Endothelial cell of umbilical vein (primary cell): ENCODE measurements at regions of chr1 and their contacts with region 1.

Region 1: DNA sequence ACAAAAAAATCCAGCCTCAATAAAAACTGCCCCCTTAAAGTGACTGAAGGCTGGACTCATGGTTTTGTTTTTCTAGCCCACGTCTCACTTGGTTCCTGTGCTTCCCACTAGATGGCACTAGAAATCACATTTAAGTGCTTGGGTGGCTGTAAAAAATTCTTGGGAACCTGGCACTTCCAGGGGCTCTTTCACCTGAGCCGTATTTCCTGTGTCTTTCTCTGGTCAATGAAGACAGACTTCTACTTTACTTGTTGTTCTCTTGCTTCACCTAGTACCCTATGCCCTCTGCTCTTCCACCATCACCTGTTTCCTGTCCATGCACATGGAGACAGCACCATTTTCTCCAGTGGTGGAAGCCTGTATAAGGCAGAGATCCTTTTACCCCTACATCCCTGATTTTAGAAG is 20.0 kb downstream of the METTL13 start:
- DNase-seq: peak; percentile 51
- H3K4me3 ChIP-seq: no peak overlapping the region
- H3K27ac ChIP-seq: no peak overlapping the region
- H3K4me1 ChIP-seq: no peaks in the 10 kb centered on the region
- H3K27me3 ChIP-seq: no peaks in the 10 kb centered on the region
- CTCF ChIP-seq: peak; percentile 69 to 75
- POLR2A ChIP-seq: no peak

Region 2: DNA sequence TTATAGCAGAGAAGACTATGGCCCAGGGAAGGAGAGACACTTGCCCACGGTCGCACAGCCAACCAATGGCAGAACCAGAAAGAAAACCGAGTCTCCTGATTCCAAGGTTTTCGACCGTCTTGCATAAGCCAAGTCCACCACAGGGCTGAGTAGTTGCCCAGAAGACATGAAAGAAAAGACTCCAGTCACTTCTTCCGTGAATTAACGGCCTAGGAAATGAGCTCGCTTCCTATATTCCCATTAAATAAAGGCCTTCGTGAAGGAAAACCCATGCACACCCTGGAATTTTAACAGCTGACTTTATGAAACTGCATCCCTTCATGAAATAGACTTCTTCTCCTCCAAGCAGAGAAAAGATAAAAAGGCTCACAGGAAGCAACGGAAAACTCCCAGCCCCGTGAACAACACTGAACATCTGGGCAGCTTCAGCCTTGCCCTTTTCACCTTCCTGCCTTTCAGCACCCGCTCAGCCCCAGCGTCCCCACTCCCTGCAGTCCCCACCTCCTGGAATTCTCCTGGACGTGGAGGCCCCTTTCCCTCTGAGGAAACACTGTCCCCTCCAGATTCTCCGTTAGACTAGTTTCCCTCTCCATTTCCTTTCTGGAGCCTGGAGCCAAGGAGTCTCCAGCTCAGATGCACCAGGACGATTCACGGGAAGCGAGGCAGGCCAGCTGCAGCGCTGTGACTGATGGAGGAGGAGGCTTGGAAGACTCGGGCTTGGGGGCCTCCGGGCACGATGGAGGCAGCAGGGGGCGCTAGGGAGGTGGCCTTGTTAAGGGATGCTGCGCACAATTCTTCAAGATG is 146.3 kb before region 1 on chr1:
- CTCF ChIA-PET with region 1: interaction called, 7 read pairs
- POLR2A ChIA-PET with region 1: no interaction called
- dilution Hi-C with region 1: no loop called
- intact Hi-C with region 1: loop called (anchors 2 kb)
- DNase-seq: peak; percentile 72
- H3K4me3 ChIP-seq: no peak overlapping the region
- H3K27ac ChIP-seq: peak overlapping the region; percentile 63
- H3K4me1 ChIP-seq: peaks cover 17% of the 10 kb centered on the region
- H3K27me3 ChIP-seq: peaks cover 0 to 6% of the 10 kb centered on the region in 2 experiments
- CTCF ChIP-seq: peak; percentile 86 to 95
- POLR2A ChIP-seq: no peak

Region 3: DNA sequence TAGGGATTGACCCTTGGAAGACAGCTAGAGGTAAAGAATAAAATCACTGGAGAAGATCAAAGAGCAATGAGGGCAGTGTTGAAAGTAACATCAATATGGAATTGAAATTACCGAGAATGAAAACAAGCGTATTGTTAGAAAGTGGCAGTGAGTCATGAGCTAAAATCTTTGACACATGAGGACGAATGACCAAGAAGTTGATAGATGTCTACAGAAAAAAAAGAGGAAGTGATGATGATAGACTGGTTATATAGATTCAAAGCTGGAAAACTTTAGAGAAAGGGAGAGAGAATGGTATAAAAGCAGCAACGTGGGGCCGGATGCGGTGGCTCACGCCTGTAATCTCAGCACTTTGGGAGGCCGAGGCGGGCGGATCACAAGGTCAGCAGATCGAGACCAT is 27.3 kb after region 1 on chr1:
- CTCF ChIA-PET with region 1: no interaction called
- POLR2A ChIA-PET with region 1: no interaction called
- dilution Hi-C with region 1: no loop called
- intact Hi-C with region 1: loop called (anchors 1 kb)
- DNase-seq: no peak
- H3K4me3 ChIP-seq: no peak overlapping the region
- H3K27ac ChIP-seq: no peak overlapping the region
- H3K4me1 ChIP-seq: no peaks in the 10 kb centered on the region
- H3K27me3 ChIP-seq: peaks cover 0 to 2% of the 10 kb centered on the region in 2 experiments
- CTCF ChIP-seq: no peak
- POLR2A ChIP-seq: no peak

Region 4: DNA sequence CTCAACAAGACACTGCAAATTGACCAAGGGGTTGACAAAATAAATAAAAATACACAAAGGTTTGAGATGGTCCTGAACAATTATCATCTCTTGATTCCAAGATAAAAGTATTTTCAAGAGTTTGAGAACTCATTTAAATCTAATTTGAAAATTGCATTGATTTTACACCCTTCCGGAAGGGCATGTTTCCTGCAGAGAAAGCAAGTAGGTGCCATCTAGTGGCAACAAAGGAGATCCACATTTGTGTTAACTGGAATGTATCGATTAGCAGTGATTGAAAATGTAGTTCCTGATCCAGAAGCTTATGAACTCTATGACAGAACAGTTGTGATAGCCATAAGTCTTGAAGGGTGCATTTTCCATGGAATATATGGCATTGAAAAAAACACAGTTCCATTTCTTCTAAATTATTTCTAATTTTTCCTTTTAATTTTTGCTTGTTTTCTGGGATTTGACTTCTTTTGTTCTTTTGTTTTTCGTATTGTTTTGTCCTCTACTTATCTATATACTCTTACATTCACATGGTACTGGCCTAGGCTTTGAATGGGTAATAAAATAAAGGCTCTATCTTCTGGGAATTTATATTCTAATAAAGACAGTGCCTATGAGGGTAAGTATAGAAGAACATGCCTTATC is 183.5 kb after region 1 on chr1:
- CTCF ChIA-PET with region 1: interaction called, 538 read pairs
- POLR2A ChIA-PET with region 1: no interaction called
- dilution Hi-C with region 1: loop called (anchors 25 kb)
- intact Hi-C with region 1: loop called (anchors 1 kb)
- DNase-seq: peak; percentile 36
- H3K4me3 ChIP-seq: no peak overlapping the region
- H3K27ac ChIP-seq: no peak overlapping the region
- H3K4me1 ChIP-seq: no peaks in the 10 kb centered on the region
- H3K27me3 ChIP-seq: no peaks in the 10 kb centered on the region
- CTCF ChIP-seq: peak; percentile 60 to 62
- POLR2A ChIP-seq: no peak

Region 5: GRCh38 chr1:172443626-172444453 is 642.4 kb after region 1 on chr1 and contains the start of gene PIGC:
- CTCF ChIA-PET with region 1: no interaction called
- POLR2A ChIA-PET with region 1: no interaction called
- dilution Hi-C with region 1: no loop called
- intact Hi-C with region 1: loop called (anchors 2 kb)
- DNase-seq: peak; percentile 83
- H3K4me3 ChIP-seq: peak within 1 kb of the TSS; percentile 68 to 92 (median 83)
- H3K27ac ChIP-seq: peak within 1 kb of the TSS; percentile 76
- H3K4me1 ChIP-seq: peaks cover 16% of the 10 kb centered on the region
- H3K27me3 ChIP-seq: no peaks in the 10 kb centered on the region
- CTCF ChIP-seq: peak; percentile 90 to 93
- POLR2A ChIP-seq: peak; percentile 63
- total RNA-seq, gene PIGC: 15.9 and 16.1 TPM in 2 replicates